ENCODE measurements at regions of chr20 and their contacts with region 1.

Region 1: GRCh38 chr20:45373353-45374100 is 4.6 kb downstream of the TP53TG5 start:
- DNase-seq: peak; percentile 80 to 91 (median 85)
- H3K4me3 ChIP-seq: peak overlapping the region; percentile 79
- H3K4me3 Mint-ChIP-seq: peak overlapping the region; percentile 84 to 94 (median 86)
- H3K27ac ChIP-seq: peak overlapping the region; percentile 39
- H3K27ac Mint-ChIP-seq: peak overlapping the region; percentile 78 to 98 (median 94)
- H3K4me1 ChIP-seq: peaks cover 13% of the 10 kb centered on the region
- H3K4me1 Mint-ChIP-seq: peaks cover 30 to 47% (median 33%) of the 10 kb centered on the region in 3 donors
- H3K27me3 ChIP-seq: no peaks in the 10 kb centered on the region
- H3K27me3 Mint-ChIP-seq: no peaks in the 10 kb centered on the region

Region 2: GRCh38 chr20:45128071-45128470 is 245.5 kb before region 1 on chr20:
- CTCF ChIA-PET with region 1: no interaction called
- POLR2A ChIA-PET with region 1: no interaction called
- DNase-seq: no peak
- H3K4me3 ChIP-seq: no peak overlapping the region
- H3K4me3 Mint-ChIP-seq: no peak overlapping the region
- H3K27ac ChIP-seq: no peak overlapping the region
- H3K27ac Mint-ChIP-seq: no peak overlapping the region
- H3K4me1 ChIP-seq: no peaks in the 10 kb centered on the region
- H3K4me1 Mint-ChIP-seq: no peaks in the 10 kb centered on the region
- H3K27me3 ChIP-seq: no peaks in the 10 kb centered on the region
- H3K27me3 Mint-ChIP-seq: peaks cover 24 to 52% of the 10 kb centered on the region in 2 donors

Region 3: GRCh38 chr20:45362804-45363610 is 10.5 kb before region 1 on chr20 and contains the start of gene SYS1:
- CTCF ChIA-PET with region 1: interaction called, 137 read pairs
- POLR2A ChIA-PET with region 1: interaction called, 66 read pairs
- DNase-seq: peak; percentile 98 to 99 (median 99)
- H3K4me3 ChIP-seq: peak within 1 kb of the TSS; percentile 92
- H3K4me3 Mint-ChIP-seq: peak within 1 kb of the TSS; percentile 90 to 99 (median 98)
- H3K27ac ChIP-seq: peak within 1 kb of the TSS; percentile 96
- H3K27ac Mint-ChIP-seq: peak within 1 kb of the TSS; percentile 95 to 100 (median 99)
- H3K4me1 ChIP-seq: peaks cover 42% of the 10 kb centered on the region
- H3K4me1 Mint-ChIP-seq: peaks cover 44 to 54% (median 48%) of the 10 kb centered on the region in 3 donors
- H3K27me3 ChIP-seq: no peaks in the 10 kb centered on the region
- H3K27me3 Mint-ChIP-seq: peaks cover 0 to 1% of the 10 kb centered on the region in 2 donors
- total RNA-seq, gene SYS1: 48.3 to 54.0 TPM

Region 4: DNA sequence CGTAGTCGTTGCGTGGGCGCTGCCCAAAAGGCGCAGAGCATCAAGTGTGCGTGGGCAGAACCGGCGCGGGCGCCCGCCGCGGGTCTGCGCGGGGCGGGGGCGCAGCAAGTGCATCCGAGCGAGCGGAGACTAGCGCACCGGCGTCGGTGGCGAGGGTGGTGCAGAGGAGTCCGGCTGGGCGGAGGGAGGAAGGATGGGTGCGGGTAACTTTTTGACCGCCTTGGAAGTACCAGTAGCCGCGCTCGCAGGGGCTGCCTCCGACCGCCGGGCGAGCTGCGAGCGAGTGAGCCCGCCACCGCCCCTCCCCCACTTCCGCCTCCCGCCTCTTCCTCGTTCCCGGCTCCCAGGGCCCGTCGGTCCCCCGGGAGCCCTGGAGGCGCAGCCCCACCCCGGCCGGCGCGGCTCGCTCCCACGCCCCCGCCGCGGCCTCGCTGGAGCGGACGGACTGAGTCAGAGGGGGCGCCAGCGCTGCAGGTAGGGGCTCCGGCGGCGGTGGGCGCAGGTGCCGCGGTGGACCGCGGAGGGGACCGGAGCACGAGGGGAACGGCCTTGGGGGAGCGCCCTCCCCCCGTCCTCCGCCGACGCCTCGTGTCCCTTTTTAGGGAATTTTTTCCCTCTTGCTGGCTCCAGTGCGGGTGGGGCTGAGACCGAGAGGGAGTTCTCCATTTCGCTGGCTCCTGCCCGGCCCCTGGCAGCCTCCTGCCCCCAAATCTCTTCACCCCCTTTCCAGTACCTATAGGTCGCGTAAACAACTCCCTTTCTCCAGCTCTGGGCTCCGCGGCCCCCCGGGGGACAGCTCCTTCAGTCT is 32.9 kb after region 1 on chr20:
- CTCF ChIA-PET with region 1: interaction called, 15 read pairs
- POLR2A ChIA-PET with region 1: interaction called, 6 read pairs
- DNase-seq: peak; percentile 34 to 64 (median 42)
- H3K4me3 ChIP-seq: peak overlapping the region; percentile 73
- H3K4me3 Mint-ChIP-seq: peak overlapping the region; percentile 77 to 95 (median 82)
- H3K27ac ChIP-seq: peak overlapping the region; percentile 57
- H3K27ac Mint-ChIP-seq: peak overlapping the region in 6 of 8 donors; percentile 26 to 87 (median 58)
- H3K4me1 ChIP-seq: peaks cover 5% of the 10 kb centered on the region
- H3K4me1 Mint-ChIP-seq: peaks cover 8 to 23% (median 17%) of the 10 kb centered on the region in 3 donors
- H3K27me3 ChIP-seq: no peaks in the 10 kb centered on the region
- H3K27me3 Mint-ChIP-seq: peaks cover 0 to 3% of the 10 kb centered on the region in 2 donors

Region 5: GRCh38 chr20:45450097-45450818 is 76.7 kb after region 1 on chr20:
- CTCF ChIA-PET with region 1: interaction called, 18 read pairs
- POLR2A ChIA-PET with region 1: no interaction called
- DNase-seq: peak in 2 of 5 donors; percentile 30 to 32
- H3K4me3 ChIP-seq: no peak overlapping the region
- H3K4me3 Mint-ChIP-seq: no peak overlapping the region
- H3K27ac ChIP-seq: no peak overlapping the region
- H3K27ac Mint-ChIP-seq: no peak overlapping the region
- H3K4me1 ChIP-seq: no peaks in the 10 kb centered on the region
- H3K4me1 Mint-ChIP-seq: peaks cover 5 to 9% (median 8%) of the 10 kb centered on the region in 3 donors
- H3K27me3 ChIP-seq: no peaks in the 10 kb centered on the region
- H3K27me3 Mint-ChIP-seq: peaks cover 8 to 21% of the 10 kb centered on the region in 2 donors

Measured in CD8-positive, alpha-beta memory T cell (primary cell).